Mammary epithelial cell (primary cell): ENCODE measurements at regions of chr2 and their contacts with region 1.

Region 1: DNA sequence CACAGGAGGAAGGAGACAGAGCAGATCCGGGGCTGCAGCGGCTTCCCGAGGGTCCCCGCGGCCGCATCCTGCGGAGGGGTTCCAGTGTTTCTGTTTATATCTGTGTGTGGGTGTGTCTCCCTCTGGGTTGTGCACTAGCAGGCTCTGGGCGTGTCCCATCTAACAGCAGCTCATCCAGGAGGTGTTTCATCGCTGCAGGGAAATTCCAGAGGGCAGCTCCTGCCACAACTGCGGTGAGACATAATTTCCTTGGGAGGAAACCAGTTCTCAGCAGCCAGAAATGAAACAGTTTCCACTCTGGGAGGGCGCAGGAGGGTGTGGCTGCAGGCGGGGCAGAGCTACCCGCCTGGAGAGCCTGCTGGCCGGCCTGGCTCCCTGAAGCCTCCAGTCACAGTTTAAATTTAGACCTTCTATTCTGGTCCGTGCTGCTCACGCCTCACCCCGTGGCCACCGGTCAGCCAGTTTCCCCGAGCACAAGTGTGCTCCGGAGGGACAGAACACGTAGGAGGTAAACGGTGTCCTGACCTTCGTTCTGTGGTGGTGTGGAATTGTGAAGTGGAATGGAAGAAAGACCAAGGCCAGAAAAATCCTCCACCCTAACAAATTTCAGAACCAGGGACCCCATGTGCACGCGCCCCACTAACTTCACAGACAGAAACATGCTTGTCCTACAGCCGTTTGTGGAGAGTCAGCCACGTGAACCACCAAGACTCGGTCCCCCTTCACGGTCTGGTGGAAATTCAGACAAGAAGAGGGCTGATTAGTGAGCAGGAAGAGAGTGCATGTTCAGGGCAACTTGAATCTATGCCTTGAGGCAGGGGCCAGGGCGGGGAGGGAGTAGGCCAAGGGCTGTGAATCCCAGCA is 50.2 kb downstream of the TEX44 start:
- DNase-seq: peak; percentile 99
- H3K4me3 ChIP-seq: peak overlapping the region in 2 of 3 experiments; percentile 32 to 34
- H3K27ac ChIP-seq: peak overlapping the region; percentile 95
- H3K4me1 ChIP-seq: peaks cover 19% of the 10 kb centered on the region
- H3K27me3 ChIP-seq: no peaks in the 10 kb centered on the region
- CTCF ChIP-seq: no peak

Region 2: GRCh38 chr2:231364961-231365810 is 277.7 kb before region 1 on chr2:
- CTCF ChIA-PET with region 1: no interaction called
- dilution Hi-C with region 1: no loop called
- in situ Hi-C with region 1: no loop called
- intact Hi-C with region 1: no loop called
- DNase-seq: peak; percentile 92
- H3K4me3 ChIP-seq: no peak overlapping the region
- H3K27ac ChIP-seq: peak overlapping the region; percentile 73
- H3K4me1 ChIP-seq: peaks cover 15% of the 10 kb centered on the region
- H3K27me3 ChIP-seq: no peaks in the 10 kb centered on the region
- CTCF ChIP-seq: no peak

Region 3: DNA sequence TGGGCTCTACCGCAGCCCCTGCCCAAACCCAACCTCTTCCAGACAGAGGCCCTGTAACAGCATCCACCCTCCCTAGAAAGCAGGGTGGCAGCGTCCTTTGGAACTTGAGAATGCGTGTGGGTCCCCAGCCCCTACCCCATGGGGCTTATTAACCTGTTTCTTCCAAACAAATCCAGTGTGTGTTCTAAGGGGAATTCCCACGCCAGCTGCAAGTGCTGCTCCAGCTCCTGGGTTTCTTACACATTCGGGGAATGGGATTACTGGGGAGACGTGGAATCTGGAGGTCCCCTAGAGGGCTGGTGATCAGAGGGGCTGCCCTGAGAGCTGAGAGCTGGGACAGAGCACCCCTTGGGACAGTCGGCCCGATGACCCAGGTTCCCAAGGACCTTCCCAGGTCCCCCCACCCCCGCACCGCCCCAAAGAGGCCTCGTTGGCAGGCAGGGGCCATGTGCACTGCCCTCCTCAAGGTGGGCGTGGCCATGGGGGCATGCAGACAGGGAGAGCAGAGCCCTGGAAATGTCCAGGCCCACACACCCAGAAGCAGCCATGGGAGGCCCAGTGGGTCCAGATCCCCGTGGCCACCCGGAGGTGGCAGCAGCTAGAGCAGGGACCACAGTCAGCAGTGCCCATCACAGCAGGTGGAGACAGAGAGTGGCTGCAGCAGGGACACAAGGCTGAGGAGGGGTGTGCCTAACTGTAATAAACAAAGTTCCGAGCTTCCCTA is 69.0 kb before region 1 on chr2:
- CTCF ChIA-PET with region 1: no interaction called
- dilution Hi-C with region 1: no loop called
- in situ Hi-C with region 1: no loop called
- intact Hi-C with region 1: no loop called
- DNase-seq: no peak
- H3K4me3 ChIP-seq: no peak overlapping the region
- H3K27ac ChIP-seq: no peak overlapping the region
- H3K4me1 ChIP-seq: no peaks in the 10 kb centered on the region
- H3K27me3 ChIP-seq: no peaks in the 10 kb centered on the region
- CTCF ChIP-seq: no peak

Region 4: DNA sequence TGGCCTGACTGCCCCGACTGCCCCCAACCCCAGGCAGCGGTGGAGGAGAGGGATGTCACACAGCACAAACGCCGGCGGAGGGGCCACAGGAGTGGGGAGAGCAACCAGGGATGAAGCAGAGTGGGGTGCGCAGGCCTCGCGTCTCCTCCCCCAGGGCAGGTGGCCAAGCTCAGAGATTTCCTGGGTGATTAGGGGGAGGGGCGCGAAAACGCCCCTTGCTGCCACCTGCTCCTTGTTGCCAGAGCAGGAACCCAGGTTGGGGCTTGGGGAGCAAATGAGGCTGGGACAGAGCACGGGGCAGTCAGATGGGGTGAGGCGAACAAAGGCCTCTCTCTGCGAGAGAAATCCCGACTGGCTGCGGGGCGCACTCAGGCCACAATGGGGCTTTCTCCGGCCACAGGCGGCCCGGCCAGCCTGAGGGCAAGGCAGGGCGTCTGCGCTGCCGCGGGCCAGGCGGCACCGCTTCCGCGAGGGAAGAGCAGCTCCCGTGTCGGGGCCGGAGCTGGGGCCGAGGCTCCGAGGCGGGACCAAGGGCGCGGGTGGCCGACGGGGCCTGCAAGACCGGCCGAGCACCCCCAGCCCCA is 38.7 kb before region 1 on chr2:
- CTCF ChIA-PET with region 1: no interaction called
- dilution Hi-C with region 1: no loop called
- in situ Hi-C with region 1: no loop called
- intact Hi-C with region 1: no loop called
- DNase-seq: peak; percentile 69
- H3K4me3 ChIP-seq: peak overlapping the region; percentile 29 to 56 (median 46)
- H3K27ac ChIP-seq: peak overlapping the region; percentile 85
- H3K4me1 ChIP-seq: peaks cover 16% of the 10 kb centered on the region
- H3K27me3 ChIP-seq: no peaks in the 10 kb centered on the region
- CTCF ChIP-seq: no peak

Region 5: GRCh38 chr2:231662028-231662810 is 19.4 kb after region 1 on chr2:
- CTCF ChIA-PET with region 1: no interaction called
- dilution Hi-C with region 1: no loop called
- in situ Hi-C with region 1: no loop called
- intact Hi-C with region 1: loop called (anchors 1 kb)
- DNase-seq: peak; percentile 92
- H3K4me3 ChIP-seq: peak overlapping the region in 2 of 3 experiments; percentile 45 to 49
- H3K27ac ChIP-seq: peak overlapping the region; percentile 53
- H3K4me1 ChIP-seq: peaks cover 18% of the 10 kb centered on the region
- H3K27me3 ChIP-seq: no peaks in the 10 kb centered on the region
- CTCF ChIP-seq: no peak

Region 6: GRCh38 chr2:231854671-231855070 is 211.8 kb after region 1 on chr2:
- CTCF ChIA-PET with region 1: no interaction called
- dilution Hi-C with region 1: no loop called
- in situ Hi-C with region 1: no loop called
- intact Hi-C with region 1: no loop called
- DNase-seq: peak; percentile 56
- H3K4me3 ChIP-seq: no peak overlapping the region
- H3K27ac ChIP-seq: no peak overlapping the region
- H3K4me1 ChIP-seq: peaks cover 2% of the 10 kb centered on the region
- H3K27me3 ChIP-seq: no peaks in the 10 kb centered on the region
- CTCF ChIP-seq: no peak